Activated CD8-positive, alpha-beta T cell treated with anti-CD3 and anti-CD28 coated beads, Interleukin-2, amount 10 ng/mL, durations not matched to agents 7 days and 5 days (primary cell): ENCODE measurements at regions of chr2 and their contacts with region 1.

Region 1: GRCh38 chr2:210503001-210503623 is 26.6 kb upstream of the LANCL1 start:
- DNase-seq: peak; percentile 46
- ATAC-seq: peak; percentile 65
- H3K4me3 Mint-ChIP-seq: peak overlapping the region; percentile 55
- H3K27ac Mint-ChIP-seq: no peak overlapping the region
- H3K4me1 Mint-ChIP-seq: peaks cover 7% of the 10 kb centered on the region
- H3K27me3 Mint-ChIP-seq: peaks cover 7% of the 10 kb centered on the region

Region 2: GRCh38 chr2:210480079-210480478 is 23.0 kb before region 1 on chr2:
- CTCF ChIA-PET with region 1: interaction called, 10 read pairs
- POLR2A ChIA-PET with region 1: no interaction called
- DNase-seq: no peak
- ATAC-seq: no peak
- H3K4me3 Mint-ChIP-seq: no peak overlapping the region
- H3K27ac Mint-ChIP-seq: no peak overlapping the region
- H3K4me1 Mint-ChIP-seq: peaks cover 26% of the 10 kb centered on the region
- H3K27me3 Mint-ChIP-seq: no peaks in the 10 kb centered on the region

Region 3: GRCh38 chr2:210568108-210568507 is 65.0 kb after region 1 on chr2:
- CTCF ChIA-PET with region 1: no interaction called
- POLR2A ChIA-PET with region 1: no interaction called
- DNase-seq: no peak
- ATAC-seq: no peak
- H3K4me3 Mint-ChIP-seq: no peak overlapping the region
- H3K27ac Mint-ChIP-seq: no peak overlapping the region
- H3K4me1 Mint-ChIP-seq: no peaks in the 10 kb centered on the region
- H3K27me3 Mint-ChIP-seq: peaks cover 2% of the 10 kb centered on the region